Activated CD4-positive, alpha-beta memory T cell treated with anti-CD3 and anti-CD28 coated beads, Interleukin-2, amount 10 ng/mL, durations not matched to agents 7 days and 5 days (primary cell): ENCODE measurements at regions of chr7 and their contacts with region 1.

Region 1: DNA sequence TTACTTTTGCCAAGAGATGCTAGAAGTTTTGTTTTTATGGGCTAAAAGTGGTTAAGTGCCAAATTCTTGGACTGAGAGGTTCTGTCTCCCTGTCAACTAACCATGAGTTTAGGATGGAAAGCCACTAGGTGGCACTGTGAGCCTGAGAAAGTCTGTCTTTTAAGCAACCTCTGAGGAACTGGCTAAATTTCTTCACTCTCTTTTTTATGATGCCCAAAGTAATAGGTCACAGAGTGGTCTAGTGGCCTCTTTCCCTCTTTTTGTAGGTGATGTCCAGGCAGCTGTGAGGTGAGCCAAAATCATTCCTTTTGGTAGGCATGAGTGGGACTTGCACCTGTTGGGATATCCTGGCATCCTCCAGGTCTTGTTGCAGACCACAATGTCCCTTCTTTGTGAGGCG is 56.8 kb downstream of the SND1 start:
- DNase-seq: peak; percentile 75
- H3K4me3 Mint-ChIP-seq: no peak overlapping the region
- H3K27ac Mint-ChIP-seq: peak overlapping the region; percentile 7
- H3K4me1 Mint-ChIP-seq: peaks cover 5% of the 10 kb centered on the region
- H3K27me3 Mint-ChIP-seq: no peaks in the 10 kb centered on the region

Region 2: GRCh38 chr7:127514499-127514898 is 194.3 kb before region 1 on chr7:
- CTCF ChIA-PET with region 1: no interaction called
- POLR2A ChIA-PET with region 1: no interaction called
- DNase-seq: no peak
- H3K4me3 Mint-ChIP-seq: no peak overlapping the region
- H3K27ac Mint-ChIP-seq: no peak overlapping the region
- H3K4me1 Mint-ChIP-seq: no peaks in the 10 kb centered on the region
- H3K27me3 Mint-ChIP-seq: peaks cover 19% of the 10 kb centered on the region

Region 3: DNA sequence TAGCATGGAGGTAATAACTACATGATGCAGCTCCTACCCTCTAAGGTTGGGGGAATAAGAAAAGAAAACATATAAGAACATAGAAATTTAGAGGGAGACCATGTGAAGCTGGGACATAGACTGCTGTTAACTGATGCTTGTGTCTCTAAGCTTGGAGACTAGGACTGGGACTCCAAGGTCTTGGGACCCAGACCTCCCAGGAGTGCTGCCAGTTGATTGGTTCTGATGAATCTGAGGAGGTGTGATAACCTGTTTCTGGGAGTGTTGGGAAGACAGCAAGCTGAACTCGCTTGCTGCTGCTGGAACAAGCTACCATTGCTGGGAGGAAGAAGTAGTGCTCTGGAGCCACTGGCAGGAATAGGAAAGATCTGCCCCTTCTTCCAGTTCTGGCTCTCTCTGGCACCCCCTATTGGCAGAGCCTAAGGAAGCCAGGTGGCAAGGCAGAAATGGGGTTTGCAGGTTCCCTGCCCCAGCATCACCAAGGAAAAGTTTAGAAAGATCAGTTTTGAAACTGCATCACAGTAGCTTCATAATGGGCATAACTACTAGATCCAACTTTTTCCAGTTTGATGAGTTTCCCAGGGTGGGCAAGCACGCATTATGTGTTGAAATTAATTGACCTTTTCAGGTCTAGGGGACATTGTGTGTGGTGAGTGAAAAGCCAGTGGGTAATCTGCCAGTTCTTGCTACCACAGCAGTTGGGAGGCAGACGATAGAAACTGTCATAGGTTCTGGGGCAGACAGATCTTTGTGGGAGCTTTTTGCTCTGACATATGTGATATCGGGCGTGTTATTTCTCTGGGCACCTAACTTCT is 83.9 kb after region 1 on chr7:
- CTCF ChIA-PET with region 1: interaction called, 10 read pairs
- POLR2A ChIA-PET with region 1: no interaction called
- DNase-seq: peak; percentile 41
- H3K4me3 Mint-ChIP-seq: no peak overlapping the region
- H3K27ac Mint-ChIP-seq: no peak overlapping the region
- H3K4me1 Mint-ChIP-seq: peaks cover 7% of the 10 kb centered on the region
- H3K27me3 Mint-ChIP-seq: no peaks in the 10 kb centered on the region

Region 4: GRCh38 chr7:127838816-127839415 is 130.1 kb after region 1 on chr7:
- CTCF ChIA-PET with region 1: no interaction called
- POLR2A ChIA-PET with region 1: no interaction called
- DNase-seq: no peak
- H3K4me3 Mint-ChIP-seq: no peak overlapping the region
- H3K27ac Mint-ChIP-seq: no peak overlapping the region
- H3K4me1 Mint-ChIP-seq: no peaks in the 10 kb centered on the region
- H3K27me3 Mint-ChIP-seq: no peaks in the 10 kb centered on the region

Region 5: GRCh38 chr7:128209229-128210035 is 500.6 kb after region 1 on chr7:
- CTCF ChIA-PET with region 1: interaction called, 79 read pairs
- POLR2A ChIA-PET with region 1: interaction called, 3 read pairs
- DNase-seq: peak; percentile 70
- H3K4me3 Mint-ChIP-seq: no peak overlapping the region
- H3K27ac Mint-ChIP-seq: no peak overlapping the region
- H3K4me1 Mint-ChIP-seq: no peaks in the 10 kb centered on the region
- H3K27me3 Mint-ChIP-seq: peaks cover 20% of the 10 kb centered on the region